BJ (cell line): ENCODE measurements at regions of chr7 and their contacts with region 1.

Region 1: DNA sequence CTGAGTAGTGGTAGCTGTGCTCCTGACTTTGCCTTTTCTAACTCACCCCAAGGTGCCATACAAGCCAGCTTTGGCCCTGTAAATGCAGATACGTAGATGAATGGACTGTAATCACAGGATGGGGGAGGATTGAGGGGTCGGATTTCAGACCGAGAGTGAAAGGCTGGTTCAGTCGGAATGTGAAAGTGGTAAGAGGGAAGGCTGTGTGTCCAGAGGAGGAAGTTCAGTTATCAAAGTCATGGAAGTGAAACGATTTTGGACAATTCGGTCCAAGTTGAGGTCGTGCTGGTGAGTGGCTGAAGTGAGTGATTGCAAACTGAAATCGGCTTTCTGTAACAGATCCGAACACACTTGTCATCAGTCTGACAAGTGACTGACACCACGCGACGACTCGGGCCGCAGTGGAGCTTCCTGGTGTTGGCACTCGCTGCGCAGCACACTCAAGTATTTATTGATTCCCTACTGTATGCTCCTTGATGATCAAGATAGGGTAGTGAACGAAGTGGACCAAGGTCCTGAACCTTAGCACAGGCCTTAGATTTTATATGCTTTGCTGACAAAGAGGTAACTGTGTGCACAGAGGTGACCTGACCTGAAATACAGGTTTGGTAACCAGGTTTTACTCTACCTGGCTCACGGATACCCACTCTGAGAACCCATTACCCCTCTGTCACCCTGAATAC is 10.5 kb downstream of the ZNF282 start:
- DNase-seq: no peak
- H3K4me3 ChIP-seq: no peak overlapping the region
- H3K27me3 ChIP-seq: no peaks in the 10 kb centered on the region
- CTCF ChIP-seq: no peak

Region 2: DNA sequence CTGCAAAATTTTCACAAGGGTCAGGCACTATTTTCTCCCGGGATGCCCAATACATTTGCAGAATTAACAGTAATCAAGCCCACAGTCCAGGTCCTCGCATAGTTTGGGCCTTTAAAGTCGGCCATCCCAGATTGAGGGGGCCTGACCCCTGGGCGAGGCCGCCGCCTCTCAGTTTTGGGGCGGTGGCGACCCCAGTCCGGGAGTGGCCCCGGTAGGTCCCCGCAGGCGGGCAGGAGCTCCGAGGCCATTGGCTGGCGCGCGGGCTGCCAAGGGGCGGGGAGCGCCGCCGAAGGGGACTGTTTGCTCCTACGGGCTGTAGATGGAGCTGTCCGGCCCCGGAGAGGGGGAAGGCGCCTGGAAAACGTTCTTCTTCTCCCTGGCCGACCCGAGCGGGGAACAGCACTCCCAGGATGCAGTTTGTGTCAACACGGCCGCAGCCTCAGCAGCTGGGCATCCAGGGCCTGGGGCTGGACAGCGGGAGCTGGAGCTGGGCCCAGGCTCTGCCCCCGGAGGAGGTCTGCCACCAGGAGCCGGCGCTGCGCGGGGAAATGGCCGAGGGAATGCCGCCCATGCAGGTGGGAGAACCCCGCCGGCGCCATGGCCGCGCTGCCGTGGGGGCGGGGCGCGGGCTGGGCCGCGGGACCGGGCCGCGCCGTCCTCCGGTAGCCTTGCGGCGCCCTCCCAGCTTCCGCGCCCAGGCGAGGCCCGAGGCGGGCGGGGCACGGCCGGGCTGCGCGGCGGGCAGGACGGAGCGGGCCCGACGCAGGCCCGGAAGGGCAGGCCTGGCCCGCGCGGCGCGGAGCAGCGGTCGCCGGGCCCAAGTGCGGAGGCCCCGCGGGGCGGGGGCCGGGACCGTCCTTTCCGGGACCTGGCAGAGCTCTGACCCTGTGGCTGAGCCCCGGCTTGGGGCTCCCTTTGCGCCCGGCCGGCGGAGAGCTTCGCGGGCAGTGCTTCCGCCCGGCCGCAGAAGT is 10.4 kb before region 1 on chr7 and contains the start of gene ZNF282:
- CTCF ChIA-PET with region 1: interaction called, 12 read pairs
- POLR2A ChIA-PET with region 1: no interaction called
- DNase-seq: peak; percentile 44
- H3K4me3 ChIP-seq: peak within 1 kb of the TSS; percentile 84
- H3K27me3 ChIP-seq: no peaks in the 10 kb centered on the region
- CTCF ChIP-seq: peak; percentile 84
- polyA plus RNA-seq, gene ZNF282: 11.6 and 15.2 TPM in 2 replicates

Region 3: GRCh38 chr7:149226840-149227494 is 21.1 kb after region 1 on chr7:
- CTCF ChIA-PET with region 1: no interaction called
- POLR2A ChIA-PET with region 1: no interaction called
- DNase-seq: no peak
- H3K4me3 ChIP-seq: no peak overlapping the region
- H3K27me3 ChIP-seq: no peaks in the 10 kb centered on the region
- CTCF ChIP-seq: no peak